Activated T-helper 1 cell treated with anti-CD3 and anti-CD28 coated beads, Interleukin-12 subunit alpha, Interleukin-12 subunit beta, Interleukin-2, Interleukin-4 antibody, amounts not matched to agents 30 ng/mL and 10 ng/mL and 1 ng/mL, durations not matched to agents 14 hours and 24 hours and 36 hours (primary cell): ENCODE measurements at regions of chr18 and their contacts with region 1.

Region 1: GRCh38 chr18:69948919-69949537 is 1.4 kb upstream of the CD226 start:
- DNase-seq: peak; percentile 40
- H3K4me3 Mint-ChIP-seq: no peak overlapping the region
- H3K27ac Mint-ChIP-seq: no peak overlapping the region
- H3K4me1 Mint-ChIP-seq: peaks cover 35% of the 10 kb centered on the region
- H3K27me3 Mint-ChIP-seq: no peaks in the 10 kb centered on the region

Region 2: DNA sequence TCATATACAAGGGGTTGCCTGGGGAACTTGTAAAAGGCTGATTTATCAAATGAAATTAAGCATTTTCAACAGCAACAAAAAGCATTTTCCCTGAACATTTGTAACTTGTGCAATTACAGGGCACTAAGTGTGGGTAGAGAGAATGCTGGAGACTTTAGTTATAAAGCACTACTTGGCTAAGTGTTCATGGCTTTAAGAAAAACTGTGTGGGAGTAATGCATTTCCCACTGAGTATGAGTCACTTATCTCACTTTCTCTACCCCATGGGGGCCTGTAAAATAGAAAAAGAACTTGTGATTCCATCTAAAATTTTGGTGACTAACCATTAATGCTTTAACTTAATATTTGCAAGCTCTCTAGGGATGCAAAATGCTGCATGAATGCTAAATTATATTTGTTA is 957.7 kb before region 1 on chr18:
- intact Hi-C with region 1: loop called (anchors 5 kb)
- DNase-seq: no peak
- H3K4me3 Mint-ChIP-seq: no peak overlapping the region
- H3K27ac Mint-ChIP-seq: no peak overlapping the region
- H3K4me1 Mint-ChIP-seq: no peaks in the 10 kb centered on the region
- H3K27me3 Mint-ChIP-seq: no peaks in the 10 kb centered on the region

Region 3: DNA sequence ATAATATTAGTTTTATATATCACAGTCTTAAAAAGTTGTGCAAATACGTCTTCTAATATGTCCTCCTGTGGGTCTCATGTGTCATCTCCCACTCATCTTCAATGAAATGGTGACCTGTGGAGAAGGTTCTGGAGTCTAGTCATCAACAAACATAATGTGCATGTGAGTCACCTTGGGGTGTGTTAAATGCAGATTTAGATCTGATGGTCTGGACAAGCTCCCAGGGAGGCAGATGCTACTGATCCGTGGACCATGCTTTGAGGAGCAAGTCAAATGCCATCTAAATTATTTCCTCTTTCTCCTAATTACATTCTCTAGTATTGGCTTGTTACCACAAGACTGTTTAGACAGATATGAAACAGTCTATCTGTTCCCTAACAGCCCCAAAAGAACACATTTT is 212.3 kb before region 1 on chr18:
- intact Hi-C with region 1: no loop called
- DNase-seq: no peak
- H3K4me3 Mint-ChIP-seq: no peak overlapping the region
- H3K27ac Mint-ChIP-seq: no peak overlapping the region
- H3K4me1 Mint-ChIP-seq: no peaks in the 10 kb centered on the region
- H3K27me3 Mint-ChIP-seq: no peaks in the 10 kb centered on the region

Region 4: GRCh38 chr18:69898241-69898861 is 50.7 kb before region 1 on chr18:
- intact Hi-C with region 1: loop called (anchors 1 kb)
- DNase-seq: no peak
- H3K4me3 Mint-ChIP-seq: peak overlapping the region; percentile 78
- H3K27ac Mint-ChIP-seq: peak overlapping the region; percentile 97
- H3K4me1 Mint-ChIP-seq: peaks cover 78% of the 10 kb centered on the region
- H3K27me3 Mint-ChIP-seq: no peaks in the 10 kb centered on the region

Region 5: DNA sequence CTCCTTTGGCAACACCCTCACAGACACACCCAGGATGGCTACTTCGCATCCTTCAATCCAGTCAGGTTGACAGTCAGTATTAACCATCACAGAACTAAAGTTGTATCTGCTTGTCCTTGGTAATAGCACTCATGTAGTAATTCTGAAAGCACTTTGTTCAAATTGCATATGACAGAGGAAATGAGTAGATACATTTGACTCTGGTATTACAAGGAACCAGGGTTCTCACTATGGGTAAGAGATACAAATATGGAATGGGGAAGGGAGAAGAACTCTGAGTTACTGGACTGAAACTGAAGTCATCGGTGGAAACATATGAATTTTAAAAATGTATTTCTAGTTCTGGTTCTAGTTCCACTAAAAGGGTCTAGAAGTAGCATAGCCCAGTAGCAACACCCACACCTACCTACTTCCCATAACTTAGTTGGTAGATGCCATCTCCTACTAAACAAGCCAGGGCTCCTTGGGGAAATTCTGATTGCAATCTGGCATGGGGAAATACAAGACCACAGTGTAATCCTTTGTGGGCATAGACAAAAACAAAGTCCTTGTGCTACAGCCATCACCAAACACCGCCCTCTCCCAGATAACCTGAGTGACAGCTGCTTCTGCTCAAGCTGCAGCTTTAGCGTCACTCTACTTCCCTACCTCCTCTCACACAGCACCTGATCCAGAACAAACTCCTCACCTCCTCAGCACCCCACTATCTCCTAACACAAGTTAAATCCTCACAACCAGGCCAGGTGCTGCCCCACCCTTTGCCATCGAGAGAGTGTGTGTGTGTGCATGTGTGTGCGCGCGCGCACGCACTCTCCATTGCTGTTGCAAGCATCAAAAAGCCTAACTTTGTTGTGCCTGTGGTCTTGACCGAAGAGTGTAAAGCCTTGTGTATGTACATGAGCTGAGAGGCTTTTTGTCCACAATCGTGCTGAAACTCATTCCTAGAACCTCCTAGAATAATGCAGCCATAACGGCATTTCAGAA is 30.0 kb after region 1 on chr18:
- intact Hi-C with region 1: loop called (anchors 1 kb)
- DNase-seq: no peak
- H3K4me3 Mint-ChIP-seq: peak overlapping the region; percentile 40
- H3K27ac Mint-ChIP-seq: peak overlapping the region; percentile 74
- H3K4me1 Mint-ChIP-seq: peaks cover 50% of the 10 kb centered on the region
- H3K27me3 Mint-ChIP-seq: no peaks in the 10 kb centered on the region

Region 6: DNA sequence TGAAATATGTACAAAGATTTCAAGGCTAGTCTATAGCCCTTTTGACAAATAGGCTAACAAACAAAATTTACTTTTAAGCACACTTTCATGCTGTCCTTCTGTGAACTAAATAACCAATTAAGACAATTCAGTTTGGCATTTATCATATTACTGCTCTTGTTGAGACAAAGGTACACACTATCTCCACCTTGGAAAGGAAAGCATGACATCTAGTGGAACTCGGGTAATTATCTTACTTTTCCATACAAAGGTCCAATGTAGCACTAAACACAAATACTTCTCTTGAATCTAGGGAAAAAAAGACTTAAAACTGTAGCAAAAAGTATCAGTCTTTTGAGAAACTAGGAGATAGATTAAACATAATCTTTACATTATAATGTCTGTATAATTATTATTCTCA is 123.7 kb after region 1 on chr18:
- intact Hi-C with region 1: loop called (anchors 5 kb)
- DNase-seq: no peak
- H3K4me3 Mint-ChIP-seq: no peak overlapping the region
- H3K27ac Mint-ChIP-seq: no peak overlapping the region
- H3K4me1 Mint-ChIP-seq: peaks cover 7% of the 10 kb centered on the region
- H3K27me3 Mint-ChIP-seq: no peaks in the 10 kb centered on the region